ENCODE measurements at regions of chr19 and their contacts with region 1.

Region 1: GRCh38 chr19:47225746-47226425 is 5.1 kb downstream of the BBC3 start:
- DNase-seq: peak; percentile 83
- H3K4me3 Mint-ChIP-seq: peak overlapping the region; percentile 83
- H3K27ac Mint-ChIP-seq: peak overlapping the region; percentile 67
- H3K4me1 Mint-ChIP-seq: peaks cover 10% of the 10 kb centered on the region
- H3K27me3 Mint-ChIP-seq: no peaks in the 10 kb centered on the region

Region 2: DNA sequence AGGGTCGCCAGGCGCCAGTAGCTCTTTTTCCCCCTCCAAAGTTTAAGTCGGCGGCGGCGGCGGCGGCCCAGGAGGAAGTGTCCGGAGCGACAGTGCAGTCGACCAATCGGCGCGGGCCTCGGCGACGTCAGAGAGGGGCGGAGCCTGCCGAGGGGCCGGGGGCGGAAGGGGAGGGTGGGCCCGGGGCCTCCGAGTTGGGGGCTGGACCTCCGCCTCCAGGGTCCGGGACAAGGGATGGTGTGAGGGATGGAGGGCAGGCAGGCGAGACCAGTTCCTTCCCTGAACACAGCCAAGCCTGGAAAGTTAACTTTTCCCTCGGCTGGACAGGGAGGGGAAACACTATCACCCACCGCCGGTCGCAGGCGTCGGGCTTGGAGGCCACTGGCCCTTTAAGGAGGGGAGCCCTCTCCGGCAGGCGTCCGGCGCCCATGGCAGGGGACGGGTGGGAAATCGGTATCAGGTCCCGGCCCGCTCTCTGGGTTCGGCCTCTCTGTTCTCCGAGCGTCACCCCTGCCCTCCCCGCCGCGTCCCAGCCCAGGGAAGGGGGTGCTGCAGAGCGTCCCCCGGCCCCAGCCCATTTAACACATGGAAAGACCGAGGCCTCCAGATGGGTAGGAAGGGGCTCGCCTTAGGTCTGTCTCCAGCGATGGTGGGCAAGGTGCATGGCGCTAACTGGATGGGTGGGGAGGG is 508.7 kb before region 1 on chr19 and contains the start of gene PRKD2:
- CTCF ChIA-PET with region 1: no interaction called
- intact Hi-C with region 1: loop called (anchors 10 kb)
- DNase-seq: peak; percentile 93
- H3K4me3 Mint-ChIP-seq: peak within 1 kb of the TSS; percentile 96
- H3K27ac Mint-ChIP-seq: peak within 1 kb of the TSS; percentile 94
- H3K4me1 Mint-ChIP-seq: peaks cover 46% of the 10 kb centered on the region
- H3K27me3 Mint-ChIP-seq: no peaks in the 10 kb centered on the region
- total RNA-seq, gene PRKD2: 62.2 to 62.3 TPM

Region 3: GRCh38 chr19:47130591-47131227 is 95.2 kb before region 1 on chr19 and contains the start of gene SAE1:
- CTCF ChIA-PET with region 1: no interaction called
- intact Hi-C with region 1: loop called (anchors 5 kb)
- DNase-seq: peak; percentile 95
- H3K4me3 Mint-ChIP-seq: peak within 1 kb of the TSS; percentile 99
- H3K27ac Mint-ChIP-seq: peak within 1 kb of the TSS; percentile 99
- H3K4me1 Mint-ChIP-seq: peaks cover 41% of the 10 kb centered on the region
- H3K27me3 Mint-ChIP-seq: no peaks in the 10 kb centered on the region
- total RNA-seq, gene SAE1: 160 to 161 TPM

Region 4: GRCh38 chr19:47157431-47158321 is 68.2 kb before region 1 on chr19:
- CTCF ChIA-PET with region 1: interaction called, 6 read pairs
- intact Hi-C with region 1: loop called (anchors 2 kb)
- DNase-seq: peak; percentile 69
- H3K4me3 Mint-ChIP-seq: peak overlapping the region; percentile 57
- H3K27ac Mint-ChIP-seq: peak overlapping the region; percentile 98
- H3K4me1 Mint-ChIP-seq: peaks cover 76% of the 10 kb centered on the region
- H3K27me3 Mint-ChIP-seq: no peaks in the 10 kb centered on the region

Region 5: GRCh38 chr19:47210689-47211316 is 15.1 kb before region 1 on chr19:
- CTCF ChIA-PET with region 1: interaction called, 33 read pairs
- intact Hi-C with region 1: loop called (anchors 1 kb)
- DNase-seq: peak; percentile 94
- H3K4me3 Mint-ChIP-seq: no peak overlapping the region
- H3K27ac Mint-ChIP-seq: peak overlapping the region; percentile 93
- H3K4me1 Mint-ChIP-seq: peaks cover 14% of the 10 kb centered on the region
- H3K27me3 Mint-ChIP-seq: no peaks in the 10 kb centered on the region

Measured in activated naive CD4-positive, alpha-beta T cell treated with anti-CD3 and anti-CD28 coated beads for 36 hours (primary cell).